ENCODE measurements at regions of chr1 and their contacts with region 1.

Region 1: GRCh38 chr1:236982380-236982779 is 21.9 kb downstream of the MT1HL1 start:
- DNase-seq: no peak
- ATAC-seq: peak; percentile 62 to 76

Region 2: GRCh38 chr1:236893626-236894545 is 88.5 kb before region 1 on chr1:
- intact Hi-C with region 1: loop called in 1 of 2 experiments (anchors 5 kb)
- DNase-seq: no peak
- ATAC-seq: no peak

Region 3: GRCh38 chr1:236938760-236939159 is 43.6 kb before region 1 on chr1:
- intact Hi-C with region 1: no loop called
- DNase-seq: no peak
- ATAC-seq: no peak

Measured in left cardiac atrium (tissue), 4 donors.